ENCODE measurements at regions of chr11 and their contacts with region 1.

Region 1: GRCh38 chr11:15074206-15075161 is 1.1 kb downstream of the CALCB start:
- DNase-seq: peak; percentile 94
- H3K4me3 Mint-ChIP-seq: peak overlapping the region; percentile 78
- H3K27ac Mint-ChIP-seq: no peak overlapping the region
- H3K4me1 Mint-ChIP-seq: peaks cover 17% of the 10 kb centered on the region
- H3K27me3 Mint-ChIP-seq: peaks cover 70% of the 10 kb centered on the region
- CTCF ChIP-seq: peak; percentile 90

Region 2: GRCh38 chr11:14606741-14607140 is 467.7 kb before region 1 on chr11:
- CTCF ChIA-PET with region 1: no interaction called
- intact Hi-C with region 1: no loop called
- DNase-seq: no peak
- H3K4me3 Mint-ChIP-seq: no peak overlapping the region
- H3K27ac Mint-ChIP-seq: no peak overlapping the region
- H3K4me1 Mint-ChIP-seq: no peaks in the 10 kb centered on the region
- H3K27me3 Mint-ChIP-seq: no peaks in the 10 kb centered on the region
- CTCF ChIP-seq: no peak

Region 3: DNA sequence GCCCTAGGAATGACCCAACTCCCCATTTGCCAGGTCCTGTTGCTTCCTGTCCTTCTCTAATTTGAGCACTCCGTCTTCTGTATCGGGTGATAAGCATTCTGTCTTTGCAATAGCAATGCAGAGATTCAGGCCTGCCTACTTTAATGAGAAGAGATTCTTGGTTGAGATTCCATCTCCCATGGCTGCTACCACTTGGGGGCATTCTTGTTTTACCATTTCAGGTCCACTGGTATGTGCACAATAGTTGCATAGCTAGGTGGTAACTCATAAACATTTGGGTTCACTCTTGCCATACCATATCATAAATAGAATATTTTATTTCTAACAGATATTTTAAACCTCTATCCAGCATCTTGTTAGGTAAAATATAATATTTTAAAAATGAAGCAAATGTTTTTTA is 35.5 kb before region 1 on chr11:
- CTCF ChIA-PET with region 1: interaction called, 7 read pairs
- intact Hi-C with region 1: loop called (anchors 5 kb)
- DNase-seq: no peak
- H3K4me3 Mint-ChIP-seq: no peak overlapping the region
- H3K27ac Mint-ChIP-seq: no peak overlapping the region
- H3K4me1 Mint-ChIP-seq: no peaks in the 10 kb centered on the region
- H3K27me3 Mint-ChIP-seq: peaks cover 27% of the 10 kb centered on the region
- CTCF ChIP-seq: no peak

Region 4: GRCh38 chr11:15216678-15217077 is 142.2 kb after region 1 on chr11:
- CTCF ChIA-PET with region 1: no interaction called
- intact Hi-C with region 1: no loop called
- DNase-seq: peak; percentile 10
- H3K4me3 Mint-ChIP-seq: no peak overlapping the region
- H3K27ac Mint-ChIP-seq: no peak overlapping the region
- H3K4me1 Mint-ChIP-seq: peaks cover 8% of the 10 kb centered on the region
- H3K27me3 Mint-ChIP-seq: no peaks in the 10 kb centered on the region
- CTCF ChIP-seq: peak; percentile 31